AG04450 (cell line): ENCODE measurements at regions of chr9 and their contacts with region 1.

Region 1: GRCh38 chr9:763692-764524 is 77.6 kb upstream of the DMRT1 start:
- DNase-seq: peak; percentile 15
- H3K4me3 ChIP-seq: no peak overlapping the region
- H3K27ac ChIP-seq: no peak overlapping the region
- H3K27me3 ChIP-seq: peaks cover 4% of the 10 kb centered on the region
- CTCF ChIP-seq: peak; percentile 73

Region 2: GRCh38 chr9:567128-567746 is 196.7 kb before region 1 on chr9:
- CTCF ChIA-PET with region 1: no interaction called
- POLR2A ChIA-PET with region 1: no interaction called
- DNase-seq: no peak
- H3K4me3 ChIP-seq: no peak overlapping the region
- H3K27ac ChIP-seq: no peak overlapping the region
- H3K27me3 ChIP-seq: peaks cover 3% of the 10 kb centered on the region
- CTCF ChIP-seq: no peak

Region 3: DNA sequence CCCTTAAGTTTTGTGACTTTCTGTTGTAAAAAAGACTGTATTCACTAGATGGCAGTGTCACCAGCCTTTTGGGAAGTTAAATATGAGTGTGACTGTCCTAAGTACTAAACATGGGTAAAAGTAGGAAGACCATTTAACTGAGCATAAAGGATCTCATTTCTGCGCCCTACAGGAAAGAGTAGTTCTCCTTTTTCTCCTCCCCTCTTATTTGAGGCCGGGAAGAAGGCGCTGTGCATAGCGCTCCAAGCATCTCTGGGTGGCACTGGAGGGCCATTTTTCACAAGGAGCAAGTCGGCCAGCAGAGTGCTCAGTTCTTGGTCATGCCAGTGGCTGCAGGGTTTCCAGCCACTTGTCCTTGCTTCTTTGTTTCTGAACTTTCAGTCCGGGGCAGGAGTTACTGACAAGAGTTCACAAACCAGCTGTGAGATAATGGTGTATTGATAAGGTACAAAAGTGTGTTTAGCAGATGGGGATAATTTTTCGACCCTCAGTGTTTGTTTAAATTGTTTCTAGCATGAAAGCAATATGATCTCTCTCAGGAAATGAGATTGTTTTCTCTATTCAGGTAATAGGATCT is 150.0 kb before region 1 on chr9:
- CTCF ChIA-PET with region 1: interaction called, 14 read pairs
- POLR2A ChIA-PET with region 1: no interaction called
- DNase-seq: peak; percentile 83
- H3K4me3 ChIP-seq: no peak overlapping the region
- H3K27ac ChIP-seq: no peak overlapping the region
- H3K27me3 ChIP-seq: no peaks in the 10 kb centered on the region
- CTCF ChIP-seq: peak; percentile 94

Region 4: DNA sequence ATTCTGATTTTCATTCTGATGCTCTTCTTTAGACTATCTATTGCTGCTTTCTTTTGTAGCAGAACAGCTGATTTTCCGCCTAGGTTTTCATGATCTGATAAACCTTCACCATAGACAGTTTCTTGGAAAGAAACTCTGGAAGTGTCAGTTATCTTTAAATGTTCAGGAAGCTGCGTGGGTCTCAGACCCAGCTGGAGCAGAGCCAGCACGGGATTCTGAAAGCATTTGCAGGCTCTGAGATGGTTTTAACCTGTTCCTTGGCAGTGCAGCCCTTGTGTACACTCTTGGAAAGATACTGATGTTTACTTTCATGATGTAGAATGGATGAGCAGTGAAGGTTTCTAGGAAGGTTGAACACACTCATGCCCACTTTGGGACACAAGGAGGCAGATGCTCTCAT is 100.4 kb before region 1 on chr9:
- CTCF ChIA-PET with region 1: no interaction called
- POLR2A ChIA-PET with region 1: no interaction called
- DNase-seq: no peak
- H3K4me3 ChIP-seq: no peak overlapping the region
- H3K27ac ChIP-seq: no peak overlapping the region
- H3K27me3 ChIP-seq: no peaks in the 10 kb centered on the region
- CTCF ChIP-seq: no peak